Heart left ventricle (tissue), 16 donors: ENCODE measurements at regions of chr10 and their contacts with region 1.

Region 1: GRCh38 chr10:67666416-67667034 is 29.5 kb downstream of the CTNNA3 start:
- DNase-seq: no peak
- ATAC-seq: peak in 2 of 4 donors; percentile 56 to 57
- H3K4me3 ChIP-seq: no peak overlapping the region
- H3K27ac ChIP-seq: peak overlapping the region in 8 of 12 donors; percentile 41 to 72 (median 52)
- H3K4me1 ChIP-seq: peaks cover 0 to 52% (median 22%) of the 10 kb centered on the region in 12 donors
- H3K27me3 ChIP-seq: no peaks in the 10 kb centered on the region
- CTCF ChIP-seq: peak; percentile 31 to 65 (median 49)
- POLR2A ChIP-seq: no peak

Region 2: GRCh38 chr10:67697724-67698131 is 31.2 kb after region 1 on chr10:
- intact Hi-C with region 1: loop called in 2 of 10 experiments (anchors 2 to 5 kb)
- DNase-seq: peak in 1 of 5 donors; percentile 10
- ATAC-seq: peak in 2 of 4 donors; percentile 50 to 64
- H3K4me3 ChIP-seq: no peak overlapping the region
- H3K27ac ChIP-seq: peak overlapping the region in 3 of 12 donors; percentile 83 to 91 (median 88)
- H3K4me1 ChIP-seq: peaks cover 0 to 21% (median 4%) of the 10 kb centered on the region in 12 donors
- H3K27me3 ChIP-seq: peaks cover 0 to 7% (median 0%) of the 10 kb centered on the region in 9 donors
- CTCF ChIP-seq: peak; percentile 49 to 77 (median 68)
- POLR2A ChIP-seq: no peak

Region 3: GRCh38 chr10:67827811-67828210 is 161.3 kb after region 1 on chr10:
- intact Hi-C with region 1: no loop called
- DNase-seq: no peak
- ATAC-seq: no peak
- H3K4me3 ChIP-seq: no peak overlapping the region
- H3K27ac ChIP-seq: no peak overlapping the region
- H3K4me1 ChIP-seq: no peaks in the 10 kb centered on the region
- H3K27me3 ChIP-seq: no peaks in the 10 kb centered on the region
- CTCF ChIP-seq: no peak
- POLR2A ChIP-seq: no peak